Activated T-helper 1 cell treated with anti-CD3 and anti-CD28 coated beads, Interleukin-12 subunit alpha, Interleukin-12 subunit beta, Interleukin-2, Interleukin-4 antibody, amounts not matched to agents 30 ng/mL and 10 ng/mL and 1 ng/mL, durations not matched to agents 14 hours and 24 hours and 36 hours (primary cell): ENCODE measurements at regions of chr7 and their contacts with region 1.

Region 1: GRCh38 chr7:24050991-24051560 is 232.9 kb upstream of the NPY start:
- DNase-seq: no peak
- H3K4me3 Mint-ChIP-seq: no peak overlapping the region
- H3K27ac Mint-ChIP-seq: no peak overlapping the region
- H3K4me1 Mint-ChIP-seq: no peaks in the 10 kb centered on the region
- H3K27me3 Mint-ChIP-seq: peaks cover 21% of the 10 kb centered on the region

Region 2: GRCh38 chr7:24034251-24034650 is 16.8 kb before region 1 on chr7:
- intact Hi-C with region 1: loop called (anchors 1 kb)
- DNase-seq: no peak
- H3K4me3 Mint-ChIP-seq: no peak overlapping the region
- H3K27ac Mint-ChIP-seq: no peak overlapping the region
- H3K4me1 Mint-ChIP-seq: peaks cover 8% of the 10 kb centered on the region
- H3K27me3 Mint-ChIP-seq: no peaks in the 10 kb centered on the region

Region 3: DNA sequence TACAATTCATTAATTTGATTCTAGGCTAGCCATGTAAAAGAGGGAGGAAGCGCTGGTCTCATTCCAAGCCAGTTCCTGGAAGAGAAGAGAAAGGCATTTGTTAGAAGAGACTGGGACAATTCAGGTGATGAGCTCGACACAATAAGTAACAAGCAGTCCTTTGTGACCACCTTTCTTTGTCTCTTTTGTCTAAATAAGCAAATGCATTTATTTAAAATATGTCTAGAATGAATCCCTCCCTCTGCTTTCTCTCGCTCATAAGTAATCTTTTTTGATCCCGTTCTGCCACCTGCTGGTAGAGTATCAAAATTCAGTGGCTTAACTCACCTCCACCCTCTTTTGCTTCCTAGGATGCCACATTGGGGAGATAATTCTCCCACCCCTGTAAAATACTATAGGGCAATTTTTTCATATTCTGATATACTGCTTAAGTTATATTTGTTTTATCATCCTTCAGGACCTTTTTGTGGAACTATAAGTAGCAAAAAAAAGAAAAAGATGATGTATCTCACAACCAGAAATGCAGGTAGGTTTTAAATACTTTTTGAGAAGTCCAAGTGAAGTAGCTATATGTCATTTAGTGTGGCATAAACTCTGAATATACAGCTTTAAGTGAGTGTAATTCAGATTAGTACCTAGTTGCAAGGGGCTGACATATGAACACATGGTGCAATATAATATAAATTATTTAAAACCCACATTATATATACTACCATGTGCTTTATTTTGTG is 614.7 kb after region 1 on chr7:
- intact Hi-C with region 1: no loop called
- DNase-seq: peak; percentile 14
- H3K4me3 Mint-ChIP-seq: no peak overlapping the region
- H3K27ac Mint-ChIP-seq: no peak overlapping the region
- H3K4me1 Mint-ChIP-seq: no peaks in the 10 kb centered on the region
- H3K27me3 Mint-ChIP-seq: no peaks in the 10 kb centered on the region